GM12878 (cell line): ENCODE measurements at regions of chr1 and their contacts with region 1.

Region 1: GRCh38 chr1:235971571-235972310 is 93.1 kb downstream of the NID1 start:
- DNase-seq: peak; percentile 84
- ATAC-seq: peak; percentile 97
- H3K4me3 ChIP-seq: peak overlapping the region; percentile 58
- H3K27ac ChIP-seq: peak overlapping the region; percentile 80
- H3K4me1 ChIP-seq: peaks cover 7% of the 10 kb centered on the region
- H3K27me3 ChIP-seq: no peaks in the 10 kb centered on the region
- CTCF ChIP-seq: peak; percentile 87 to 95 (median 89); a peak in 5 of 6 replicates
- EP300 ChIP-seq: no peak
- POLR2A ChIP-seq: peak; percentile 75
- RAD21 ChIP-seq: peak; percentile 98

Region 2: DNA sequence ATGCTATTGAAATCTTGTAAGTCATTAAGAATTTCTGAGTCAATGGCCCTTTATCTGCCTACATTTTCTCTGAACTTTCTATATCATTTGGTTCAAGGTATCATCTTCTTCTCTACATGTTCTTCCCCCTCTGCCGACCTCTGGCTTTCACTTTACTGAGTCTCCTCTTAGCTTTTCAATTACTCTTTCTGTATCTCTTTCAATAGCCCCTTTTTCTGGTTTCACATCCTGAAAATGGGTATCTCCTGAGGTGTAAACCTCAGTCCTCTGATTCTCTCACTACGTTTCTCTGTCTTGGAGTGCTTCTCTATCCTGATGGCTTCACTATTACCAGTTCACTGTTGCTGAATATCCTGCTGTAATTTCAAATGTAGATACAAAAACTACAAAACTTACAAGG is 203.9 kb before region 1 on chr1:
- CTCF ChIA-PET with region 1: interaction called, 10 read pairs
- POLR2A ChIA-PET with region 1: interaction called, 3 read pairs
- RAD21 ChIA-PET with region 1: interaction called, 3 read pairs
- SMC1A ChIA-PET with region 1: interaction called, 4 read pairs
- in situ Hi-C with region 1: no loop called
- intact Hi-C with region 1: no loop called
- DNase-seq: peak; percentile 45
- ATAC-seq: peak; percentile 96
- H3K4me3 ChIP-seq: 0 out of 2 replicates have a peak overlapping the region, but pooled peaks have one; percentile 2
- H3K27ac ChIP-seq: no peak overlapping the region
- H3K4me1 ChIP-seq: peaks cover 9% of the 10 kb centered on the region
- H3K27me3 ChIP-seq: no peaks in the 10 kb centered on the region
- CTCF ChIP-seq: no peak
- EP300 ChIP-seq: no peak
- POLR2A ChIP-seq: no peak
- RAD21 ChIP-seq: no peak

Region 3: GRCh38 chr1:235831148-235831547 is 140.6 kb before region 1 on chr1:
- CTCF ChIA-PET with region 1: interaction called, 5 read pairs
- POLR2A ChIA-PET with region 1: interaction called, 4 read pairs
- RAD21 ChIA-PET with region 1: interaction called, 7 read pairs
- SMC1A ChIA-PET with region 1: interaction called, 11 read pairs
- in situ Hi-C with region 1: no loop called
- intact Hi-C with region 1: no loop called
- DNase-seq: peak; percentile 35
- ATAC-seq: peak; percentile 99
- H3K4me3 ChIP-seq: no peak overlapping the region
- H3K27ac ChIP-seq: no peak overlapping the region
- H3K4me1 ChIP-seq: no peaks in the 10 kb centered on the region
- H3K27me3 ChIP-seq: no peaks in the 10 kb centered on the region
- CTCF ChIP-seq: no peak
- EP300 ChIP-seq: peak in 1 of 2 experiments; percentile 34; a peak in 1 of 4 replicates
- POLR2A ChIP-seq: no peak
- RAD21 ChIP-seq: no peak

Region 4: DNA sequence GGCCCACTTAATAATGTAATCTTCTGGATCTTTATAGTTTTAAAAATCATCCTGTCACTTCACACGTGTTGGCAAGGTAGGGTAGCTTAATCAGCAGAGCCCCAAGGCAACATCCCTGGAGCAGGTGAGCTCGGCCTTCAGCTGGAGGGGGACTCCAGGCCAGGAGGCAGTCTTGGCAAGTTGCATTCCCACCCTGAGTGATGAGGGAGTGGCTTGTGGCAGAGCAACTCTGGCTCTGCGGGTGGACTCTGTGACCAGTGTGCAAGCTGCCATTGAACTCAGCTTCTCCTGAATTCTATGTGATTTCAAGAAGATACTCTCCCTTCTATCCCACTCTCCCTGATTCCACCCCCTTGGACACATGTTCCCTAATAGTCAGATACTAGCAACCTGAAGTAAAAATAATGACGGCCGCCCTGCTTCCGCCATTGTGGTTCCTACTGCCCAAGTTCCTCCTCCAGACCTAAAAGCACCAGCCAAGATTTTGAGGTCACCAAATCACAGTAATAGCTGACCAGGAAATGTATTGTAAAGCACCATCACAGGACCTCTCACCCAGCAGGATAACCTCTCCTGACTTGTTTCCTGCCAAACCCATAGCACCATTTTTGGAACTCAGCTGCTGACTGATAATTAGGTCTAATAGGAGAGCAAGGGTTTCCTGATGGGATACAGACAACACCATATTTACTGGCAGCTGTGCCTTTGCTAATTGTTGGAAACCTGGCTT is 93.5 kb before region 1 on chr1:
- CTCF ChIA-PET with region 1: interaction called, 10 read pairs
- POLR2A ChIA-PET with region 1: interaction called, 4 read pairs
- RAD21 ChIA-PET with region 1: interaction called, 13 read pairs
- SMC1A ChIA-PET with region 1: interaction called, 16 read pairs
- in situ Hi-C with region 1: no loop called
- intact Hi-C with region 1: no loop called
- DNase-seq: no peak
- ATAC-seq: no peak
- H3K4me3 ChIP-seq: peak overlapping the region; percentile 26; the same call in 1 of the 2 replicates
- H3K27ac ChIP-seq: no peak overlapping the region
- H3K4me1 ChIP-seq: peaks cover 26% of the 10 kb centered on the region
- H3K27me3 ChIP-seq: no peaks in the 10 kb centered on the region
- CTCF ChIP-seq: no peak
- EP300 ChIP-seq: no peak
- POLR2A ChIP-seq: no peak
- RAD21 ChIP-seq: no peak

Region 5: DNA sequence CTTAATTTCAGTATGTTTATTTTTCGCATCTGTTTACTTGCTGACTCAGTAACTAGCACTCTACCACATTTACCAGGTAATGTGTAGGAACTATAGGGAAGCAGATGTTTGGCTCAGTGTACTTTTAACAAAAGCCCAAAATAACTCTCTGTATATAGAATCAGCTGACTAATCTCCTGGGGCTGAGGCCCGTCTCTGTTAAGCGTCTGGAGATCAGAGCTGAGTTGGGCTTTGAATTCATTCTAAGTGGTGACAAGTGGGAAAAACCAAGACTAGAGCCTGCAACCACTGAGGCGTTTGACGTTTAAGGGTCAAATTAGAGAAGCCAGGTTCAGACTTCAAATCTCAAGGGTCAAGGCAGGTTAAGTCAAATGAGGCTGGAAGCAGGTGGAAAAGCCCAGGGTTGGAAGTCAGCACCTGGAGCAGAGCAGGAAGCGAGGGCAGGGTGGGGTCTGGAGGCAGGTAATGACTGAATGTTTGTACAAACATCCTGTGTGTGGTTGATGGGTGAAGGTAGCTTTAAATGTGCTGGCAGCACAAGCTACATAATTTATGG is 48.2 kb before region 1 on chr1:
- CTCF ChIA-PET with region 1: interaction called, 19 read pairs
- POLR2A ChIA-PET with region 1: no interaction called
- RAD21 ChIA-PET with region 1: interaction called, 5 read pairs
- SMC1A ChIA-PET with region 1: interaction called, 11 read pairs
- in situ Hi-C with region 1: no loop called
- intact Hi-C with region 1: no loop called
- DNase-seq: no peak
- ATAC-seq: peak; percentile 81
- H3K4me3 ChIP-seq: no peak overlapping the region
- H3K27ac ChIP-seq: no peak overlapping the region
- H3K4me1 ChIP-seq: peaks cover 6% of the 10 kb centered on the region
- H3K27me3 ChIP-seq: no peaks in the 10 kb centered on the region
- CTCF ChIP-seq: no peak
- EP300 ChIP-seq: peak in 1 of 2 experiments; percentile 42; a peak in 1 of 4 replicates
- POLR2A ChIP-seq: no peak
- RAD21 ChIP-seq: no peak

Region 6: GRCh38 chr1:235999259-235999925 is 27.7 kb after region 1 on chr1:
- CTCF ChIA-PET with region 1: interaction called, 35 read pairs
- POLR2A ChIA-PET with region 1: interaction called, 9 read pairs
- RAD21 ChIA-PET with region 1: interaction called, 28 read pairs
- SMC1A ChIA-PET with region 1: interaction called, 48 read pairs
- in situ Hi-C with region 1: no loop called
- intact Hi-C with region 1: loop called (anchors 1 kb)
- DNase-seq: peak; percentile 96
- ATAC-seq: peak; percentile 81
- H3K4me3 ChIP-seq: peak overlapping the region; percentile 46; the same call in 1 of the 2 replicates
- H3K27ac ChIP-seq: peak overlapping the region; percentile 97
- H3K4me1 ChIP-seq: peaks cover 58% of the 10 kb centered on the region
- H3K27me3 ChIP-seq: no peaks in the 10 kb centered on the region
- CTCF ChIP-seq: no peak
- EP300 ChIP-seq: peak; percentile 92 to 94; a peak in 3 of 4 replicates
- POLR2A ChIP-seq: no peak; the same call in 1 of the 2 replicates
- RAD21 ChIP-seq: peak; percentile 15; the same call in 1 of the 2 replicates

Region 7: DNA sequence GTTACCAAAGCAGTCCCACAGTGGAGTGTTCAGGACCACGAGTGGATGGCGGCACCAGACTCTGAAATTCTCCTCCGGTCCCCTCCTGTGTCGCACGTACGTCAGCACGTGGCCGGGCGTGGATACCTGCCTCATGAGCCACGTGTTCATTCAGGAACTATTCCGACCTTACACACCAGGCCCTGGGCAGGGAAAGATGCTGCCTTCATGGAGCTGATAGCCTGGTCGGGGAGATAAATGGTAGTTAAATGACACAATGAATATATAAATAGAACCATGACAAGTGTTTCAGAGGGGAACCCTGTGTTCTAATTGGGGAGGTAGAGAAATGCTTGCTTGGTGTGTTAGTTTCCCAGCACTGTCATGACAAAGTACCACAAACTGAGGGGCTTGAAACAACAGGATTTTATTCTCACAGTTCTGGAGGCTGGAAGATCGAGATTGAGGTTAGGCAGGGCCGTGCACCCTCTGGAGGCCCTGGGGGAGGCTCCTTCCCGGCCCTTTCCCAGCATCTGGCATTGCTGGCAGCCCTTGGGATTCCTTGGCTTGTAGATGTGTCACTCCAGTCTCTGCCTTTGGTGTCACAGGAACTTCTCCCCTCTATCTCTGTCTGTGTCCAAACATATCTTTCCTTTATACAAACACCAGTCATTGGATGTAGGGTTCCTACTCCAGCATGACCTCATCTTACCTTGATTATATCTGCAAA is 141.7 kb after region 1 on chr1:
- CTCF ChIA-PET with region 1: no interaction called
- POLR2A ChIA-PET with region 1: no interaction called
- RAD21 ChIA-PET with region 1: no interaction called
- SMC1A ChIA-PET with region 1: no interaction called
- in situ Hi-C with region 1: no loop called
- intact Hi-C with region 1: no loop called
- DNase-seq: no peak
- ATAC-seq: peak; percentile 47
- H3K4me3 ChIP-seq: no peak overlapping the region
- H3K27ac ChIP-seq: no peak overlapping the region
- H3K4me1 ChIP-seq: no peaks in the 10 kb centered on the region
- H3K27me3 ChIP-seq: no peaks in the 10 kb centered on the region
- CTCF ChIP-seq: no peak
- EP300 ChIP-seq: no peak
- POLR2A ChIP-seq: no peak
- RAD21 ChIP-seq: no peak